Heart left ventricle (tissue), 16 donors: ENCODE measurements at regions of chr5 and their contacts with region 1.

Region 1: DNA sequence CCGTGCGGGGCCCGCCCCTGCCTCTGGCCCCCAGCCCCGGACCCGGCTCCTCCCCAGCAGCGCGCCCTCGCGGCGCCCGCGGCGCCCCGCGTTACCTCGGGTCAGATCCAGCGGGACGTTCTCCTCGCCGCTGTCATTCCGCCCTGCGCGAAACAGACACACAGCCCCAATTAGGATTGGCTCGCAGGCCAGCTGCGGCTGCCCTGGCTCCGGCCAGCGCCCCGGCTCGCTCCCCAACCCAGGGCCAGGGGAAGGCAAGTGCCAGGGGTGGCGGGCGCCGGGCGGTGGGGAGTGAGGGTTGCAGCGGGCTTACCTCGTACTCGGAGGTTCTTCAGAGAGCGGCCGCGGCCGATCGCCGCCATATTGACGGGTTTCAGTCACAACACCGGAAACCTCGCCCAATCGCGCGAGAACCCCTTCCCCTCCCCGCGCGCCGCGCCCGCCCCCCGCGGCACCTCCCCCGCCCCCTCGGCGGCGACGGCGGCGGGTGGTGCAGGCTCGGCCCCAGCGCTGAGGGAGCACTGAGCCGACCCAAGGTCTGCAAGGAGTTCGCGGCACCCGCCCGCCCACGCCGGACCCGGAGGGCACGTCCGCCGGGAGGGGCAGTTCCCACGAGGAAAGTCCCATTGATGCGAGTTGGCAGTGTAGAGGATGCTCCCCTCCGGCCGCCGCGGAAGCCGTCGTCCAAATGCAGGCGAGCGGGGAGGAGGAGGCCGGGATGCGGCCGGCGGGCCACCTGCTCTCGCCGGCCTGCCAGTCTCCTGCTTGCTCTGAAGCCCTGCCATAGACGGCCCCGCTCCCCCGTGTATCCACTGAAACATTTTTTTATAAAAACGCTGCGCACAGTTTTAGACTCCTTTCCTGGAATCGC is at the start of gene RICTOR:
- DNase-seq: peak; percentile 92 to 96 (median 94)
- ATAC-seq: peak; percentile 90 to 97 (median 94)
- H3K4me3 ChIP-seq: peak within 1 kb of the TSS; percentile 60 to 94 (median 88)
- H3K27ac ChIP-seq: peak within 1 kb of the TSS; percentile 94 to 99 (median 98)
- H3K4me1 ChIP-seq: peaks cover 0 to 53% (median 26%) of the 10 kb centered on the region in 12 donors
- H3K27me3 ChIP-seq: no peaks in the 10 kb centered on the region
- CTCF ChIP-seq: no peak
- POLR2A ChIP-seq: peak; percentile 55 to 85
- total RNA-seq, gene RICTOR: 20.6 to 76.3 (median 34.2) TPM

Region 2: GRCh38 chr5:38845526-38846378 is 228.5 kb before region 1 on chr5 and contains the start of gene OSMR:
- intact Hi-C with region 1: loop called in 1 of 10 experiments (anchors 10 kb)
- DNase-seq: peak; percentile 91 to 95 (median 93)
- ATAC-seq: peak; percentile 90 to 97 (median 96)
- H3K4me3 ChIP-seq: peak within 1 kb of the TSS; percentile 52 to 88 (median 74)
- H3K27ac ChIP-seq: peak within 1 kb of the TSS; percentile 87 to 96 (median 93)
- H3K4me1 ChIP-seq: peaks cover 0 to 43% (median 5%) of the 10 kb centered on the region in 12 donors
- H3K27me3 ChIP-seq: peaks cover 0 to 35% (median 4%) of the 10 kb centered on the region in 9 donors
- CTCF ChIP-seq: peak in 2 of 12 donors; percentile 8
- POLR2A ChIP-seq: peak in 1 of 2 donors; percentile 53
- total RNA-seq, gene OSMR: 8.1 to 39.2 (median 12.0) TPM

Region 3: DNA sequence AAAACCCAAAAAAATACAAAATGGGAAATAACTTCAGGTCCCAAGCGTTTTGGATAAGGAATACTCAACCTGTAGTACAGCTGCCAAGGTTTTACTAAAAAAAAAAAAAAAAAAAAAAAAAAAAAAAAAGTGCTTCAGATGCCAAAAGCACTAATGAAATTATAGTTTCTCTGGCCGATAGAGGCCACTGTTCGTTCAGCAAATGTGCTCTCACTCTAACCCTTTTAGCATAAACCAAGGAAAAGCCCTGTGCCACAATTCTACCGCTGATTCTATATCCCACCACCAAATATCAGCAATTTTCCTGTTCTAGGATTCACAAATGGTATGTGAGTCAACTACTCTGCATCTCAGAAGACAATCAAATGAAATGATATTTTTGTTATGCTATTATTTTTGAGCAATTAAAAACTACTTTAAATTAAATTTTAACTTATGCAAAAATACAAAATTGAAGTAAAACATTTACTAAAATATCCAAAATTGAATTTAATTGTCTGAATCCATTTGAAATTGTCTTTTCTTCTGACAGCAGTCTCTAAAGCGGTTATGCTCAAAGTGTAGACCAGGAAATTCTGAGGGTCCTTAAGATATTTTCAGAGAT is 79.8 kb before region 1 on chr5:
- intact Hi-C with region 1: loop called in 3 of 10 experiments (anchors 2 to 5 kb)
- DNase-seq: peak in 3 of 5 donors; percentile 30 to 36 (median 31)
- ATAC-seq: peak; percentile 73 to 85 (median 78)
- H3K4me3 ChIP-seq: no peak overlapping the region
- H3K27ac ChIP-seq: no peak overlapping the region
- H3K4me1 ChIP-seq: peaks cover 0 to 17% (median 0%) of the 10 kb centered on the region in 12 donors
- H3K27me3 ChIP-seq: no peaks in the 10 kb centered on the region
- CTCF ChIP-seq: peak; percentile 33 to 70 (median 59)
- POLR2A ChIP-seq: no peak

Region 4: GRCh38 chr5:39005566-39006232 is 68.6 kb before region 1 on chr5:
- intact Hi-C with region 1: loop called in 3 of 10 experiments (anchors 2 to 5 kb)
- DNase-seq: no peak
- ATAC-seq: peak; percentile 73 to 91 (median 84)
- H3K4me3 ChIP-seq: no peak overlapping the region
- H3K27ac ChIP-seq: peak overlapping the region in 6 of 12 donors; percentile 3 to 54 (median 26)
- H3K4me1 ChIP-seq: peaks cover 0 to 20% (median 7%) of the 10 kb centered on the region in 12 donors
- H3K27me3 ChIP-seq: no peaks in the 10 kb centered on the region
- CTCF ChIP-seq: peak; percentile 23 to 63 (median 52)
- POLR2A ChIP-seq: no peak

Region 5: GRCh38 chr5:39015743-39016586 is 58.3 kb before region 1 on chr5:
- intact Hi-C with region 1: loop called in 5 of 10 experiments (anchors 5 kb)
- DNase-seq: no peak
- ATAC-seq: peak; percentile 28 to 72 (median 67)
- H3K4me3 ChIP-seq: no peak overlapping the region
- H3K27ac ChIP-seq: peak overlapping the region; percentile 51 to 94 (median 82)
- H3K4me1 ChIP-seq: peaks cover 6 to 48% (median 33%) of the 10 kb centered on the region in 12 donors
- H3K27me3 ChIP-seq: no peaks in the 10 kb centered on the region
- CTCF ChIP-seq: no peak
- POLR2A ChIP-seq: no peak

Region 6: GRCh38 chr5:39024005-39024404 is 50.2 kb before region 1 on chr5:
- intact Hi-C with region 1: loop called in 4 of 10 experiments (anchors 5 kb)
- DNase-seq: peak in 2 of 5 donors; percentile 43 to 45
- ATAC-seq: peak; percentile 81 to 92 (median 86)
- H3K4me3 ChIP-seq: no peak overlapping the region
- H3K27ac ChIP-seq: peak overlapping the region in 5 of 12 donors; percentile 9 to 37 (median 14)
- H3K4me1 ChIP-seq: peaks cover 0 to 48% (median 24%) of the 10 kb centered on the region in 12 donors
- H3K27me3 ChIP-seq: no peaks in the 10 kb centered on the region
- CTCF ChIP-seq: peak in 1 of 12 donors; percentile 26
- POLR2A ChIP-seq: no peak